Calu3 (cell line): ENCODE measurements at regions of chr20 and their contacts with region 1.

Region 1: DNA sequence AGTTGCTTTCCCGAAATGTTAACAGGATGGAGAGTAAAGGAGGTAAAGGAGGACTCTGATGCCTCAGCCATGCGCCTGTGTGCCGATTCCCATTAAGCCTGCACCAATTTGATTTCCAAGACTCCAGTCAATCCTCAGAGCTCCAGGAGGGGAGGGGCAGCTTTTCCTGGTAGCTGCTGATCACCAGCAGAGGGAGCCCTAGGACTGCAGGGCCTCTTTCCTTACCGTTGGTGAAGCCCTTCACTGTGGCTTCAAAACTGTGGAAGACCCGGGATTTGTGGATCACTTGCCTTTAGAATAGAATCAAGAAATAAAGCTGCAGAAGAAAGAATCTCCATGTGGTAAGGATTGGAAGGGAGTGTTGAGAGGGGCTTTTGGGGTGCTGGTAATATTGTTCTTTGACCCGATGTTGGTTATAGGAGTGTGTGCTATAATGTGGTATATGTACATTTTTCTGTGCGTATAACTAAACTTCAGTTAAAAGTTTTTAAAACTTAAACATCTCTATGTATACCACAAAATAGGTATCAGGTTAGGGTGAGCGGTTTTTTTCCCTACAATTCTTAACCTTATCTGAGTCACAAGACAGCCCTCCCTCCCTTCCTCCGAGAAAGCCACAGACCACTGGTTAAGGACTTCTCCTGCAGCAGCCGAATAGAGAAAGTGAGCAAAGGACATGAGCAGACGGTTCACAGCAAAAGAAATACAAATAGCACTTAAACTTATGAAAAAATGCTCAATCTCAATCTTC is 6.9 kb upstream of the OSER1 start:
- DNase-seq: peak; percentile 91
- H3K4me3 Mint-ChIP-seq: no peak overlapping the region
- H3K27ac Mint-ChIP-seq: no peak overlapping the region
- H3K4me1 Mint-ChIP-seq: peaks cover 16% of the 10 kb centered on the region
- H3K27me3 Mint-ChIP-seq: no peaks in the 10 kb centered on the region
- CTCF ChIP-seq: peak; percentile 98

Region 2: GRCh38 chr20:44310664-44311639 is 93.4 kb after region 1 on chr20 and contains the start of gene FITM2:
- CTCF ChIA-PET with region 1: interaction called, 56 read pairs
- intact Hi-C with region 1: loop called (anchors 1 kb)
- DNase-seq: peak; percentile 100
- H3K4me3 Mint-ChIP-seq: peak within 1 kb of the TSS; percentile 98
- H3K27ac Mint-ChIP-seq: peak within 1 kb of the TSS; percentile 83
- H3K4me1 Mint-ChIP-seq: peaks cover 12% of the 10 kb centered on the region
- H3K27me3 Mint-ChIP-seq: no peaks in the 10 kb centered on the region
- CTCF ChIP-seq: peak; percentile 98
- total RNA-seq, gene FITM2: 11.7 and 13.0 TPM in 2 replicates

Region 3: GRCh38 chr20:44460795-44461141 is 243.3 kb after region 1 on chr20:
- CTCF ChIA-PET with region 1: interaction called, 6 read pairs
- intact Hi-C with region 1: loop called (anchors 2 kb)
- DNase-seq: peak; percentile 40
- H3K4me3 Mint-ChIP-seq: no peak overlapping the region
- H3K27ac Mint-ChIP-seq: no peak overlapping the region
- H3K4me1 Mint-ChIP-seq: peaks cover 23% of the 10 kb centered on the region
- H3K27me3 Mint-ChIP-seq: no peaks in the 10 kb centered on the region
- CTCF ChIP-seq: peak; percentile 67

Region 4: DNA sequence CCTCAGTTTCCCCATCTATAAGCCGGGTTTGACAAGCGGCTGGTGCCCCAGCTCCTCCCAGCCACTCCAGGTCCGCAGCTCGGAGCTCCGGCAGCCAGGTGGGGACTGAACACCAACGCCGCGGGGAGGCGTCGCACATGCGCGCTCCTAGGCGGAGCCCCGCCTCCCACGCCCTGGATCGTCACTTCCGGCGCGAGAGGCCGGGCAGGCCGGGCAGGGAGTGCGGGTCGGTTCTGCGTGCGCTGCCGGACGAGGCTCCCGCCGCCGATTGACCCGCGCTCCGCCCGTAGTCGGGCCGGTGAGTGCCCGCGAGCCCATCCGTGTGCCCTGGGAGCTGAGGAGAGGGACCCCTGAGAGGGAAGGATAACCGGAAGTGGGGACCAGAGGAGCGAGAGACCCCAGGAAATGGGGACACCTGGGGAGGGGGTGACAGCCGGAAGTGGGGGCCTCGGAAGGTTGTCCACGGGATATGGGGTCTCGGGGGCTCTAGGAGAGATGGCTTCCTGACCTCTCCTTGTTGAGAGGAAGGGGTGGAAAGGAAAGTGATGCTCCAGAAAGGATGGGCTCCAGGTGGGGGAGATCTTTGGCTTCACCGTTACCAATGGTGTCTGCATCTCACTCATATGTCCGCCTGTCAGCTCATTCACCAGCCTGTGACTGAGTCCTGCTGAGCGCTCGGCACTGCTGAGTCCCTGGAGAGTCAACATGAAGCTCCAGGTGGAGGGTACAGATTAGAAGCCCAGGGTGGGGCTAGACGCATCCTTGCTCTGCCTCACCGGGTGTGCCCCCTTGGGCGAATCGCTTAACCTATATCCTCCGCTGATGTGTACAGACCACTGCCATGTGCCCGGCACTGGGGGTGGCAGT is 258.4 kb after region 1 on chr20 and contains the start of gene TTPAL:
- CTCF ChIA-PET with region 1: interaction called, 19 read pairs
- intact Hi-C with region 1: loop called (anchors 1 kb)
- DNase-seq: peak; percentile 98
- H3K4me3 Mint-ChIP-seq: peak within 1 kb of the TSS; percentile 100
- H3K27ac Mint-ChIP-seq: peak within 1 kb of the TSS; percentile 94
- H3K4me1 Mint-ChIP-seq: peaks cover 26% of the 10 kb centered on the region
- H3K27me3 Mint-ChIP-seq: no peaks in the 10 kb centered on the region
- CTCF ChIP-seq: no peak
- total RNA-seq, gene TTPAL: 39.9 and 42.2 TPM in 2 replicates

Region 5: DNA sequence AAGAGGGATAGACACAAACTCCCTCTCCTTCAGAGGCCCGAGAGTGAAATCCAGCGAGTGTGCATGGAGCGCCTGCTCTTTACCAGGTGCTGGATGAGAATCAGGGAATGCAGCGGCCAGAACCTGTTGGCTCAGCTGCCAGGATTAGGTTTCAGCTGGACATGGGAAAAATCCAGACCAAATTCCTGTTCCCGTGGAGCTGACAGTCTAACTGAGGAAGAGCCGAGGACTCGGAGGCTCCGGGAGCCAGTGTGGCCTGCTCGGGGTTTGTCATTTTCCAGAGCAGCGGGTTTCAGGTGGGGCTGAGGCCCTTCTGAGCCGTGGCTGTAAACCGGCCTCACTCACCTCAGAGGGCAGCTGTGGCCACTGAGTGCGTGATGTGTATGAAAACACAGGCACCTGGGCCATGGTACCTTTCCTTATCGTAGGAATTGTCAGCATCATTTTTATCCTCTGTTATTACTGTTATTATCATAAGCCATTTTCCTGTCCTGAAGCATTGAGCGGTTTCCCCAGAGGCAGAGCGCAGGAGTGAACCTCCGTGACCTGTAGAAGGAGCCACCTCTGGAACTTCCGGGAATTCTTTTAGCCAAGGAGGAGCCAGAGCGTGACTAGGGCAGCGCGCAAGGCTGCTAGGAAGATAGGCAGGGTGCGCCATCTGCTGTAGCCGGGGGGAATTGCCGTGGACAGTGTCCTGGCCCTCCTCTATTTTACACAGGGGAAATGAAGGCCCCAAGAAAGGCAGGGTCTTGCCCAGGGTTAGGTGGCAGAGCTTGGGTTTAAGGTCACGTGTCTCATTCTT is 392.2 kb after region 1 on chr20:
- CTCF ChIA-PET with region 1: interaction called, 11 read pairs
- intact Hi-C with region 1: loop called (anchors 1 kb)
- DNase-seq: peak; percentile 97
- H3K4me3 Mint-ChIP-seq: peak overlapping the region; percentile 52
- H3K27ac Mint-ChIP-seq: no peak overlapping the region
- H3K4me1 Mint-ChIP-seq: peaks cover 17% of the 10 kb centered on the region
- H3K27me3 Mint-ChIP-seq: no peaks in the 10 kb centered on the region
- CTCF ChIP-seq: peak; percentile 99

Region 6: GRCh38 chr20:44683263-44684046 is 465.9 kb after region 1 on chr20:
- CTCF ChIA-PET with region 1: interaction called, 3 read pairs
- intact Hi-C with region 1: loop called (anchors 5 kb)
- DNase-seq: peak; percentile 90
- H3K4me3 Mint-ChIP-seq: no peak overlapping the region
- H3K27ac Mint-ChIP-seq: no peak overlapping the region
- H3K4me1 Mint-ChIP-seq: peaks cover 36% of the 10 kb centered on the region
- H3K27me3 Mint-ChIP-seq: no peaks in the 10 kb centered on the region
- CTCF ChIP-seq: peak; percentile 84

Region 7: GRCh38 chr20:44866703-44867335 is 649.3 kb after region 1 on chr20:
- CTCF ChIA-PET with region 1: no interaction called
- intact Hi-C with region 1: loop called (anchors 5 kb)
- DNase-seq: no peak
- H3K4me3 Mint-ChIP-seq: no peak overlapping the region
- H3K27ac Mint-ChIP-seq: no peak overlapping the region
- H3K4me1 Mint-ChIP-seq: peaks cover 8% of the 10 kb centered on the region
- H3K27me3 Mint-ChIP-seq: peaks cover 29% of the 10 kb centered on the region
- CTCF ChIP-seq: no peak